Heart right ventricle (tissue), 16 donors: ENCODE measurements at regions of chr7 and their contacts with region 1.

Region 1: DNA sequence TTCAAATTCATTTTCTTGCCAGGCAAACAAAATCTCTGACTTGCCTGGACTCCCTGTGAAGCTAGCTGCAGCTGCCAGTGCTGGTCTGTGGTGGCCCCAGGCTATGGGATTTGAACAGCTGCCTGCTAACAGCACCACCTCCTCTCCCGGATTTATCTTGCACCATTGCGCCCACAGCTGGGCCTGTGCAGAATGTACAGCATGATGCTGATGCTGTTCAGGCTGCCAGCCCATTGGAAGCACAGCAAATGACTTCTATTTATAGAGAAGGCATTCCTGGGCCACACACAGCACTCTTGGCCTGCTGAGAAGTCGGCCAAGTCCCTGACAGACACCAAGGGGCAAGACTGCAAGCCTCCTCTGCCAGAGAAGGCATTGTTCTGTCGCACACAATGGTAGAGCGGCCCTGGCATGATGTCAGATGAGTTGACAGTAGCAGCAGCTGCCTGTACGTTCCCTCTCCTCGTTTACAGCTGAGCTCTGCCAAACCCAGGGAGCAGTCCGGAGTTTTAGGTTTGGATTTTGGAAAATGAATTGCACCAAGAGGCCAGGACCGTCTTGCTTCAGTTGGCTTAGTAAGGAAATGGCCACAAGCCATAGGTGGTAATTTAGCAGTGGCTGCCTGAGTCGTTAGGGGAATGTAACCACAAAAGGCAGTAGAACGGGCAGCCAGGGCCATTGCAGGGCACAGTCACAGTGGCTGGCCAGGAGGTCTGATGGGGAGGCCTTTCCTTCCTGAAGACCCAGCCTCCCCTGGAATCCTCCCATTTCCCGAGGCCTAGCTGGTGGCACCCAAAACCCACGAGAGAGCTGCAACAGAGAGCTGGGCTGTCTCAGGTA is 38.5 kb downstream of the MTURN start:
- DNase-seq: peak; percentile 64 to 75
- ATAC-seq: peak; percentile 66 to 94 (median 84)
- H3K4me3 ChIP-seq: no peak overlapping the region
- H3K27ac ChIP-seq: peak overlapping the region; percentile 61 to 88 (median 80)
- H3K4me1 ChIP-seq: peaks cover 11 to 98% (median 43%) of the 10 kb centered on the region in 9 donors
- H3K27me3 ChIP-seq: no peaks in the 10 kb centered on the region
- CTCF ChIP-seq: peak in 4 of 9 donors; percentile 21 to 45 (median 40)

Region 2: DNA sequence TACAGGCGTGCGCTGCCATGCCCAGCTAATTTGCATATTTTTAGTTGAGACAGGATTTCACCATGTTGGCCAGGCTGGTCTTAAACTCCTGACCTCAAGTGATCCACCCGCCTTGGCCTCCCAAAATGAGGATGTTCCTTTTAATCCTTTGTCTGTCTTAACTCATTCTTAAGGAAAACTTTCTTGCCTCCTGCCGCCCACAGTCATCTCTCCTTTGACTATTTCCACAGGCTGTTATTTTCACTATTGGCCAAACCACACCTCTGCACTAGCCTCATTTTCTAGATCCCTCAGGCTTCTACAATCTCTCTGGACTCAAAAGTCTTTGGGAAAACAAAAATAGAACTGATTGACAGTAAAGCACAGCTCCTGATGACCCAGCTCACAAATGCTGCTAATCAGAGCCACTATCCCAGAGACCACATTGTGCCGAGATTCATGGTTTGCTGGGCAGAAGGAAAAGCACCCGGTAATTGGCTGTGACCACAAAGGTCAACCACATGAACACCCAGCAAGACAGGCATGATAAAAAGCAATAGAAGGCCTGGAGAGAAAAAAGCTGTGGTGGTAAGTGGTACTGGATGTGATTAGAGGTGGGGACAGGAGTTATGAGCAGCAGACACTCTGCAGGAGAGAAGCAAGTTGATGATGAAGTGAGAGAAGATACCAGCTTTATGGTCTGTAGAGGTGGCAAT is 67.0 kb after region 1 on chr7:
- intact Hi-C with region 1: loop called in 1 of 10 experiments (anchors 5 kb)
- DNase-seq: no peak
- ATAC-seq: peak; percentile 34 to 87 (median 66)
- H3K4me3 ChIP-seq: no peak overlapping the region
- H3K27ac ChIP-seq: peak overlapping the region in 2 of 10 donors; percentile 5 to 35
- H3K4me1 ChIP-seq: peaks cover 0 to 32% (median 22%) of the 10 kb centered on the region in 9 donors
- H3K27me3 ChIP-seq: no peaks in the 10 kb centered on the region
- CTCF ChIP-seq: no peak

Region 3: DNA sequence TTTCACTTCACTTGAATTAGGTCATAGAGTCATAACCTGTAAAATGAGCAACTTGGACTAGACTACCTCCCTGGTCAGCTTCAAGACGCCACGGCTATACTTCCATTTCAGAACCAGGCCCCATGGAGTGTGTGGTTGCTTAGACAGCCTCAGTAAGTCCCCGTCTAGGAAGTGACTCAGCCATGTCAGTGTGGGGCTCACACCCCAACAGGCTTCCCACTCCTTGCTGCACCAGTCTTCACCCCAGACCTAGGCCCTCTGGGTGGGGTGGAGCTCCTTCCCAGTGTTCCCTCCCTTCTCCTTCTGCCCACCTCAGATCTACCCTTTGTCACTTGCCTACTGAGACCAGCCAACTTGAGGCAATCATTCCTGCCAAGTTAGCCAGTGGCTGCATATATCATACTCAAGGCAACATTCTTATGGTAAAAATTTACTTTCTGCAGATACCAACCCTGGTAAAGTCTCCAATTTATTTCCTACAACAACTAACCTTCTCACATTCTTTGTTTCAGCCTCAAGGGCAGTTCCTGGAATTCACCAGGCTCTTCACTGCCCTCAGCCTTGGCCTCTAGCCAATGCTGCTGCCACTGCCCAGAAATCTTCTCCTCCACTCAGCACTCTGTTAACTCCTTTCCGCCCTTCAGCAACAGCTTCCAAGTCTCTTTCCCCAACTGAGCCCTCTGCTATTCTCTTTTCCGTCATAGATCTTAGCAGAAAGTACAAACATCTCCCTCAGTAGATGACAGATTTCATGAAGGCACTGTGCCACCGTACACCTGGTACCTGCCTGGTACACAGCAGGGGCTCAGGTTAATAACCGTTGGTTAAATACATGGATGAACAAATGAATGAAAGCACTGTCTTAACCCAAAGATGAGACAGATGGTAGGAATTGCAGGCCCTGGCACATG is 79.9 kb after region 1 on chr7:
- intact Hi-C with region 1: loop called in 4 of 10 experiments (anchors 2 to 10 kb)
- DNase-seq: peak; percentile 50 to 72
- ATAC-seq: peak; percentile 80 to 96 (median 93)
- H3K4me3 ChIP-seq: no peak overlapping the region
- H3K27ac ChIP-seq: peak overlapping the region in 6 of 10 donors; percentile 66 to 83 (median 75)
- H3K4me1 ChIP-seq: peaks cover 0 to 45% (median 35%) of the 10 kb centered on the region in 9 donors
- H3K27me3 ChIP-seq: no peaks in the 10 kb centered on the region
- CTCF ChIP-seq: no peak

Region 4: DNA sequence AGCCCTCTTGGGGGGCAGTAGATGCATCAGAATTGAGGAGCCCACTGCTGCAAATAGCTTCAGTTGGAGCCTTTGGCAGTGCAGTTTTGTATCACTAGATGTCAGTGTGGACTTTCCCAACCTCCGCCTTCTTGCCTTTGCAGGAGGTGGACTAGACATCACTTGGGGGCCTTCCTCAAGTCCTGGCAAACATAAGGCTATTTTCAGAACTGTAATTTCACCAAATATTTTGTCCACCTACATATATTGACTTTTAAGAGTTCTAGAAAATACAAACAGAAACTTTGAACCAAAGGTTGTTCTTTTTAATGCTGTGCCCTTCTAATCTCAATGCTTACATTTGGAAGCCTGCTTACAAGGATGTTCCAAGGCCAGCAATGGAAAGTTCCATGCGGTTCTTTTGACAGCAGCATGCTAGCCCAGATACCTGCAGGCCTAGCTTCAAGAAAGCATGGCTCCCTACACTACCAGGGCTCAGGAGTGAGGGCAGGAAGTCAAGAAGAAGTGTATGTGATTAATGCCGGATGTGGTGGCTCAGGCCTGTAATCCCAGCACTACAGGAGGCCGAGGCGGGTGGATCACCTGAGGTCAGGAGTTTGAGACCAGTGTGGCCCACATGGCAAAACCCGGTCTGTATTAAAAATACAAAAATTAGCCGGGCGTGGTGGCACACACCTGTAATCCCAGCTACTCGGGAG is 103.1 kb after region 1 on chr7:
- intact Hi-C with region 1: loop called in 6 of 10 experiments (anchors 5 to 10 kb)
- DNase-seq: peak in 1 of 2 donors; percentile 59
- ATAC-seq: peak; percentile 64 to 85 (median 76)
- H3K4me3 ChIP-seq: no peak overlapping the region
- H3K27ac ChIP-seq: no peak overlapping the region
- H3K4me1 ChIP-seq: peaks cover 0 to 22% (median 0%) of the 10 kb centered on the region in 9 donors
- H3K27me3 ChIP-seq: no peaks in the 10 kb centered on the region
- CTCF ChIP-seq: peak; percentile 40 to 78 (median 66)

Region 5: GRCh38 chr7:30284298-30285066 is 111.2 kb after region 1 on chr7 and contains the start of gene ZNRF2:
- intact Hi-C with region 1: loop called in 6 of 10 experiments (anchors 5 to 10 kb)
- DNase-seq: peak; percentile 98
- ATAC-seq: peak; percentile 92 to 99 (median 98)
- H3K4me3 ChIP-seq: peak within 1 kb of the TSS; percentile 45 to 95 (median 81)
- H3K27ac ChIP-seq: peak within 1 kb of the TSS; percentile 83 to 99 (median 98)
- H3K4me1 ChIP-seq: peaks cover 4 to 42% (median 29%) of the 10 kb centered on the region in 9 donors
- H3K27me3 ChIP-seq: no peaks in the 10 kb centered on the region
- CTCF ChIP-seq: peak; percentile 11 to 83 (median 53)
- total RNA-seq, gene ZNRF2: 5.3 to 13.8 (median 8.8) TPM

Region 6: GRCh38 chr7:30412810-30413504 is 239.7 kb after region 1 on chr7:
- intact Hi-C with region 1: loop called in 2 of 10 experiments (anchors 5 to 10 kb)
- DNase-seq: peak in 1 of 2 donors; percentile 49
- ATAC-seq: peak; percentile 85 to 95 (median 92)
- H3K4me3 ChIP-seq: no peak overlapping the region
- H3K27ac ChIP-seq: no peak overlapping the region
- H3K4me1 ChIP-seq: peaks cover 0 to 26% (median 0%) of the 10 kb centered on the region in 9 donors
- H3K27me3 ChIP-seq: no peaks in the 10 kb centered on the region
- CTCF ChIP-seq: peak; percentile 27 to 78 (median 68)